RWPE1 (cell line): ENCODE measurements at regions of chr17 and their contacts with region 1.

Region 1: DNA sequence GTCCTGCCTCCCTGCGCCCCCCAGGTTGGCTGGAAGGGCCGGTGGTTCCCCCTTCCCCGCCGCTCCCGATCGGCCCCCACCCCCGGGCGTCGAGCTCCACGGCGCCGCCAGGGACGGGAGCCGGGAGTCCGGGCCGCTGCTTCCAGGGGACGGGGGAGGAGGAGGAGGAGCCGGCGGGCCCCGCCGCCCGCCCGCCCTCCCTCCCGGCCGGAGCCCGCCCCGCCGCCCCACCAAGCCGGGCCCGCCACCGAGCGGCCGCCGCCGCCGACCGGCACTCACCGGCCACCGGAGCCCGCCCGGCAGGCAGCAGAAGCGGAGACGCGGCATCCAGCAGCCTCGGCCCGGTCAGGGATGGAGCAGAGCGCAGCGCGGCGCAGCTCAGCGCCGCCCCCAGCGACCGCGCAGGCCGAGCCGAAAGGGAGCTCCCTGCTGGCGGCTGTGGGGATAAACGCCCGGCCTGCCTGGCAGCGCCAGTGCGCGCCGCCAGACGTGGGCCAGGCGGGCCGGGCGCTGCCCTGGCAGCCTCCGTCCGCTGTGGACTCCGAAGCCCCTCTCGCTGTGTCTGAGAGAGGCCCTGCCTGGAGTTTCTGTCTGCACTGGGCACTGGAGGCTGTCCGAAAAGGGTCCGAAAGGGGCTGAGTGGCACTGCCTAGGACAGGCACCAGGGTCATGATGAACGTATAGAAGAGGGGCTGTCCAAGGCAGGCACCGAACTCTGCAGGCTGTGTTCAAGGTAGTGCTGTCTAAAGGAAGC is at the start of gene MYO18A:
- DNase-seq: peak; percentile 87
- H3K27ac ChIP-seq: peak within 1 kb of the TSS; percentile 94
- CTCF ChIP-seq: peak; percentile 90

Region 2: GRCh38 chr17:29133146-29133713 is 47.0 kb before region 1 on chr17:
- CTCF ChIA-PET with region 1: no interaction called
- POLR2A ChIA-PET with region 1: no interaction called
- DNase-seq: no peak
- H3K27ac ChIP-seq: peak overlapping the region; percentile 67
- CTCF ChIP-seq: no peak

Region 3: DNA sequence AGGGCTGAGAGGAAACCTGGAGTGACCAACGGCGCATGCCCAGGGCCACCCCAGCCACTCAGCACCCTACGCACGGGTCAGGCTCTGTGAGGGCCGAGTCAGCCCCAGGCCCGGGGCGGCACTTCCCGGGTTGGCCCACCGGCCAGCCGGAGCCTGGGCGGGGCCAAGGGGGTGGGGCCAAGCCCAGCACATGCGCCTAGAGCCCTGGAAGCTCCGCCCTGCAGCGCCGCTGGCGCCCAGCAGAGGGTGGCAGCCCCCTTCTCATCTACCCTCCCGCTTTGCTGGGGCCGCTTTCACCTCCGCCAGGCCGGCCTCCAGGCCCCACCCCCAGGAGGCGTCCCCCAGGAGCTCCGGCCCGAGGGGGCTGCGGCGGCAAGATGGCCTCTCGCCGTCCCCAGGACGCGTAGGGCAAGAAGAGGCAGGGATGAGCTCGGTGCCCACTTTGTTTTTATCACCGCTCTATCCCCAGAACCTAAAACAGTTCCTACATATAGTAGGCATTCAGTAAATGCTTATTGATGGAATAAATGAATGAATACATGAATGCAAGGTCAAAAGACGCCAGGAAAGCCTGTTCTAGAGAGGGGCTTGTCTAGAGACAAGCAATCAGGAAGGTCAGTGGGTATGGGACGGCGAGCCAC is 31.3 kb before region 1 on chr17:
- CTCF ChIA-PET with region 1: interaction called, 81 read pairs
- POLR2A ChIA-PET with region 1: interaction called, 17 read pairs
- DNase-seq: peak; percentile 89
- H3K27ac ChIP-seq: peak overlapping the region; percentile 97
- CTCF ChIP-seq: peak; percentile 92

Region 4: GRCh38 chr17:29225396-29225795 is 45.2 kb after region 1 on chr17:
- CTCF ChIA-PET with region 1: no interaction called
- POLR2A ChIA-PET with region 1: no interaction called
- DNase-seq: no peak
- H3K27ac ChIP-seq: no peak overlapping the region
- CTCF ChIP-seq: no peak